Caco-2 (cell line): ENCODE measurements at regions of chr14 and their contacts with region 1.

Region 1: GRCh38 chr14:34671716-34672115 is 41.8 kb upstream of the SNX6 start:
- DNase-seq: no peak
- H3K4me3 ChIP-seq: no peak overlapping the region
- H3K4me3 Mint-ChIP-seq: no peak overlapping the region
- H3K27ac Mint-ChIP-seq: no peak overlapping the region
- H3K4me1 ChIP-seq: no peaks in the 10 kb centered on the region
- H3K4me1 Mint-ChIP-seq: no peaks in the 10 kb centered on the region
- H3K27me3 ChIP-seq: no peaks in the 10 kb centered on the region
- H3K27me3 Mint-ChIP-seq: no peaks in the 10 kb centered on the region
- CTCF ChIP-seq: no peak

Region 2: DNA sequence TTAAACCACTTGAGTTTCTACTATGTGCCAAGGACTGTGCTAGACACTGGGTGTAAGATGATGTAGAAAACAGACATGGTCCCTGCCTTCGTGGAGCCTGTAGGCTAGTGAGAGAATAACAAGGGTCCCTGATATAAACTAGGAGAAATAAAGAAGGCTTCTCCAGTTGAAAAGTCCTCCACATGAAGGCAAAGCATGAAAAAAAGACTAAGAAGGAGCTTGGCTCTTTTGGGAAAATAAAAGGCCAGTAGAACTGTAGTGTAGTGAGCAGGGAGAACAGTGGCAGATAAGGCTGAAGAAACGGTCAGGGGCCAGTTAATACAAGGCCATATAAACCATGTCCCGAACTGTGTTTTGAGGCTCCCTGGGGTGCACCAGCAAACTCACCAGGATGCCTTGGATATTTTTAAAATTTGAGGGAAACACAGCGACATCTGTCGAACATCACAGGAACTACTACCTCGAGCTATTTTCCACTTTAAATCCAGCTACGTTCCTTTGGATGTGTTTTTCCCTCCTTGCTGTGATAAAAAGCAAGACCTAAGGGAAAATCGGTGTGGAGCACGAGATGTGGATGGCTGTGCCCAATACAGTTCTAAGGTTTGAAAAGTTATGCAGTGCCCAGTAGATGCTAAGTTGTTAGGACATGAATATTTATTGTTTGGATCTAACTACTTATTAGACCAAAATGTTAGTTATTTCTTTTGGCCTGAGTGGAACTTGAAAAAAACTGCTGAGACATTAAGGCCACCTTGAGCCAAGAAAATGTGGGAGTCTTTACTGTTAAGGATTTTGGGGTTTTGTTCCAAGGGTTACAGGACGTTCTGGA is 51.2 kb after region 1 on chr14:
- CTCF ChIA-PET with region 1: interaction called, 4 read pairs
- POLR2A ChIA-PET with region 1: no interaction called
- intact Hi-C with region 1: loop called (anchors 1 kb)
- DNase-seq: peak in 1 of 2 experiments; percentile 60
- H3K4me3 ChIP-seq: no peak overlapping the region
- H3K4me3 Mint-ChIP-seq: no peak overlapping the region
- H3K27ac Mint-ChIP-seq: no peak overlapping the region
- H3K4me1 ChIP-seq: peaks cover 7% of the 10 kb centered on the region
- H3K4me1 Mint-ChIP-seq: peaks cover 8% of the 10 kb centered on the region
- H3K27me3 ChIP-seq: no peaks in the 10 kb centered on the region
- H3K27me3 Mint-ChIP-seq: no peaks in the 10 kb centered on the region
- CTCF ChIP-seq: peak; percentile 70 to 80